Activated CD4-positive, alpha-beta T cell treated with anti-CD3 and anti-CD28 coated beads, Interleukin-2, amount 10 ng/mL, durations not matched to agents 24 days and 14 days (primary cell): ENCODE measurements at regions of chr3 and their contacts with region 1.

Region 1: GRCh38 chr3:157865352-157866000 is 240.7 kb downstream of the SHOX2 start:
- DNase-seq: peak; percentile 81
- H3K4me3 Mint-ChIP-seq: no peak overlapping the region
- H3K27ac Mint-ChIP-seq: no peak overlapping the region
- H3K4me1 Mint-ChIP-seq: no peaks in the 10 kb centered on the region
- H3K27me3 Mint-ChIP-seq: no peaks in the 10 kb centered on the region

Region 2: GRCh38 chr3:157417247-157417646 is 448.2 kb before region 1 on chr3:
- intact Hi-C with region 1: no loop called
- DNase-seq: no peak
- H3K4me3 Mint-ChIP-seq: no peak overlapping the region
- H3K27ac Mint-ChIP-seq: no peak overlapping the region
- H3K4me1 Mint-ChIP-seq: no peaks in the 10 kb centered on the region
- H3K27me3 Mint-ChIP-seq: peaks cover 3% of the 10 kb centered on the region

Region 3: DNA sequence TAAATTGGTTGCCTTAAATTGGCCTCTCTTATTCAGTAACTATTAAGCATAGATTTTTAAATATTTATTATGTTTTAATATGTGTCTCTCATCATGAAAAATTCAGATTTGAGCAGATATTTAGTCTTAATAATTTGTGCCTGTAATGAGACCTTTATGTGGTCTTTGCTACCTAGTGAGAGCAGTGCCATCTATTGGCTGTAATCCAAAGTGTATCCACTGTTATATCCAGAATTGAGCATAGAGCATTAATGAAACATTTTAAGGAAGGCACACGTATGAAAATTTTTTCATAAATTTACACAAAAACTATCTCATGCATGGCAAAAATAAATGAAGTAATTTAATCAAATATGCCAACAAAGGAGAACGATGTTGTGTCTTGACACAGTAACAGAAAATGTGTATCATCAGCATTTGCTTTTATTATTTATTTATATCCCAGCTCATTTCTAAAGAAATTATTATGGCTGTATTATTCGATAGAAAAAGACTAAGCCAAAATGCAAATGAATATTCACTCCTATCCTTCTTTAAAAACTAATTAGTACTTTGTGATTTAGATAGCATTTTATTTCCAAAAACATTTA is 448.0 kb after region 1 on chr3:
- intact Hi-C with region 1: loop called (anchors 1 kb)
- DNase-seq: no peak
- H3K4me3 Mint-ChIP-seq: no peak overlapping the region
- H3K27ac Mint-ChIP-seq: no peak overlapping the region
- H3K4me1 Mint-ChIP-seq: no peaks in the 10 kb centered on the region
- H3K27me3 Mint-ChIP-seq: no peaks in the 10 kb centered on the region

Region 4: DNA sequence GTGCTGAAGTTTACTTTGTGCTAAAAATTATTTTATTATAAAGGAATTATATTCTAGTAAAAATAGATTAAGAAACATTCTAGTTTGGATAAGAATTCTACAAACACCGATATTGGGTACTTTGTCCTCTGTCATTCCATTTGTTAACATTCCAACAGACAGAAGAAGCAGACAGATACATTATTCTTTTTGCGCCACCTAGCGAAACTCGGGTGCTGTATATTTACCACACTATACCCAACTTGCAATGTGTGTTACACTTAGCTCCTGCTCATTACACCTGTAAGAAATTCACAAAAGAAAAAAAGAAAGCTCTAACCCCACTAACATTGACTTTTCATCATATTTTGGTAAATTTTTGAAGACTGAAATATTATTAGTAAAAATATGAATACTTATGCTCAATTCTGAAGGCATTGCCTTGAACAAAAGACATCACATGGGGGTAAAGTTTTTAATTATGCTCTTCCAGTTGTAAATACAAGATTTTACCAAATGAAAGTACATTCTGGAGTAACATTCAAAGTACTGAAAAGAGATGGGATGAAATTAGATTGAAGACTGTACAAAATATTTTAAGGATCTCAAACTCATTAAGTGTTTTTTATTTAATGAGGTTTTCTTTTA is 569.0 kb after region 1 on chr3:
- intact Hi-C with region 1: loop called (anchors 2 kb)
- DNase-seq: peak; percentile 78
- H3K4me3 Mint-ChIP-seq: no peak overlapping the region
- H3K27ac Mint-ChIP-seq: no peak overlapping the region
- H3K4me1 Mint-ChIP-seq: no peaks in the 10 kb centered on the region
- H3K27me3 Mint-ChIP-seq: no peaks in the 10 kb centered on the region

Region 5: DNA sequence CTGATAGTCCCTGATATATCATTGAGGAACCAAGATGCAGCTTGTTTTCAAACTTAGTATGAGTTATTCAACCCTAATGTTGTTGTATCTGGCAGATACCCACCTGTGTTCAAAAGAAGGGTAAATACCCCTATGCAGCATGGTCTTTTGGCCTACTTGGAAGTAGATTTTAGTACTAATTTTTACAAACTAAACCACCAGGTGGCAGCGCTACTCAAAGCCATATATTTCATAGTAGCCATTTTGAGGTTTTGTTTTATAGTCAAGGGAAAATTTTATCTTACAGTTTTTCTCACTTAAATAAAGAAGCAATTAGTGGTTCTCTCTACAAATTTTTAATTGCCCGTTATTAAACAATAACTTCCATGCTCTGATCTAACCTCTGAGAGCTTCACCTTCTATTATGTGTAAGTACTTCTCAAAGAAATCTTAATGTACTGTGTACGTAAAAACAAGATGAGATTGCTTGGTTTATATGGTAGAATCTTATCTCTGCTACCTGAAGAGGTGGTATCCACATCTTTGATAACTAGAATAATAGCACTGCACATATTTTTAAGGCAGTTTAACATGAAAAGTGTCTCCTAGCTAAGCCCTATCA is 674.0 kb after region 1 on chr3:
- intact Hi-C with region 1: loop called (anchors 10 kb)
- DNase-seq: peak; percentile 79
- H3K4me3 Mint-ChIP-seq: no peak overlapping the region
- H3K27ac Mint-ChIP-seq: no peak overlapping the region
- H3K4me1 Mint-ChIP-seq: no peaks in the 10 kb centered on the region
- H3K27me3 Mint-ChIP-seq: no peaks in the 10 kb centered on the region